MCF 10A (cell line): ENCODE measurements at regions of chr11 and their contacts with region 1.

Region 1: DNA sequence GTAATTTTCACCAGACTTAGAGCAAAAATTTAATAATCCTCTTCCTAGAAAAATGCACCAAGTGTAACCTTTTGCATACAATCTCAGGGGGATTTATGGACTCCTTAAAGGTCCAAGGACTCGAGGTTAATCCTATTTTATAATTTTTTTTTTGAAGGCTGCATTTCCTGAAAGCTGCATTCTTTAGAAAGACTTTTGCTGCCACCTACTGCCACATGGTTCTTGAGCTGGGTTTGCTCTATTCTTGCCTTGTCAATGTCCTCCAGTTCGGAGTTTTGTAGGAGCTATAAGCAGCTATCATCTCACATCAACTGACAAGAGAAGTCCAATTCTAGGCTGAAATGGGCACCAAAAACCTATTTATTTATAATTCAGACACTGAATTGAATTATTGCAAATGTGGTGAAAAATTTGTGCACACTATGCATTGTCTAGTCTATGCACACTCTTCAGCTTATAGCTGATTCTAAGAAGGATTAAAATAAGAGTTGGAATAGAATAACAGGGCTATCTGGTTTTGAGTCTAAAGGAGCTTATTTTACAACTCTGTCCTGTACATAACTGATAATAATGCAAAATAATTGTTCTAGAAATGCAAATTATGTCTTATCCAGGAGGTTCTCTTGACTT is 31.3 kb downstream of the TRAF6 start:
- DNase-seq: peak; percentile 59
- H3K4me3 Mint-ChIP-seq: no peak overlapping the region
- H3K27ac Mint-ChIP-seq: no peak overlapping the region
- H3K4me1 Mint-ChIP-seq: no peaks in the 10 kb centered on the region
- H3K27me3 Mint-ChIP-seq: no peaks in the 10 kb centered on the region
- CTCF ChIP-seq: peak; percentile 72

Region 2: GRCh38 chr11:36289226-36289852 is 189.5 kb before region 1 on chr11 and contains the start of gene COMMD9:
- CTCF ChIA-PET with region 1: interaction called, 242 read pairs
- POLR2A ChIA-PET with region 1: interaction called, 15 read pairs
- intact Hi-C with region 1: loop called (anchors 1 kb)
- DNase-seq: peak; percentile 90
- H3K4me3 Mint-ChIP-seq: peak within 1 kb of the TSS; percentile 84
- H3K27ac Mint-ChIP-seq: peak within 1 kb of the TSS; percentile 91
- H3K4me1 Mint-ChIP-seq: peaks cover 28% of the 10 kb centered on the region
- H3K27me3 Mint-ChIP-seq: no peaks in the 10 kb centered on the region
- CTCF ChIP-seq: no peak
- total RNA-seq, gene COMMD9: 38.7 and 39.8 TPM in 2 replicates

Region 3: DNA sequence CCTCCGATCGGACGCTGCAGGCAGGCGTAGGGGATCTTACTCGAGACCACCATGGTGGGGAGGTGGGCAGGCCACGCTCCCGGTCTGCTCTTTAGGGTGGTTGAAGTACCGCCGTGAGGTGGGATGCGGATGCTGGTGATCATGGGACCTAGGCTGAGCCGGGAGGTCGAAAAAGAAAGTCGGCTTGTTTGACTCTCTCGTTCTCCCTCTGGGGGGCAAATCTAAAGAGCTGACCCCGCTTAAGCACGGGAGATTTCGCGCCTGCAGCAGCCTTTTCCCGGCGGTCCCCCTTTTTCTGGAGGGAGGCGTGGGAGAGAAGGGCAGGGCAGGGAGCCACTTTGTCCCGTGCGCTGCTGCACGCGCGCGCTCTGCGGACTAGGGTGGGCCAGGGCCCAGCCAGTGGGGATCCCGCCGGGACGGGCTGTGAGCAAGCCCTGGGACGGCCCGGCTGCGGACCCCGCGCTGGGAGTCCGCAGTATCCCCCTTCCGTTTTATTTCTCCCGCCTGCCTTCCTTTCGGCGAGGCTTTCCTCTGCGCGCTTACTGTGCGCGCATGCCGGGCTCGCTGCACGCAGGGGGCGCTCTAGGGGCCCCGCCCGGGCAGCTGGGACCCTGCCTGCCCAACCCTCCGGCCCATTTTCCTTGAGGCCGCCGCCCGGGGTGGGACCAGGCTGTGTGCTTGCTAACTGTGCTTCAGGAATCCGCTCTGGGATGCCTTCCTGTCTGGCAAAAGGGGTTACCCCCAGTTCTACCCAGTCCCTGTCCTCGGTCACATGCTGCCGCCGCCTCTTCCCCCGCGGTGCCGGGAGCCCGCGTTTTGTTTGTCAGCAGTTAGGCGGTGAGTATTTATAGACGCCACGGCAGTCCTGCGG is 101.7 kb before region 1 on chr11:
- CTCF ChIA-PET with region 1: interaction called, 8 read pairs
- POLR2A ChIA-PET with region 1: interaction called, 4 read pairs
- intact Hi-C with region 1: loop called (anchors 1 kb)
- DNase-seq: peak; percentile 31
- H3K4me3 Mint-ChIP-seq: peak overlapping the region; percentile 89
- H3K27ac Mint-ChIP-seq: peak overlapping the region; percentile 35
- H3K4me1 Mint-ChIP-seq: peaks cover 26% of the 10 kb centered on the region
- H3K27me3 Mint-ChIP-seq: no peaks in the 10 kb centered on the region
- CTCF ChIP-seq: peak; percentile 69

Region 4: GRCh38 chr11:36492724-36493304 is 14.0 kb after region 1 on chr11:
- CTCF ChIA-PET with region 1: interaction called, 61 read pairs
- POLR2A ChIA-PET with region 1: interaction called, 3 read pairs
- intact Hi-C with region 1: no loop called
- DNase-seq: peak; percentile 61
- H3K4me3 Mint-ChIP-seq: no peak overlapping the region
- H3K27ac Mint-ChIP-seq: no peak overlapping the region
- H3K4me1 Mint-ChIP-seq: no peaks in the 10 kb centered on the region
- H3K27me3 Mint-ChIP-seq: no peaks in the 10 kb centered on the region
- CTCF ChIP-seq: peak; percentile 80